ENCODE measurements at regions of chr2 and their contacts with region 1.

Region 1: GRCh38 chr2:189096769-189097447 is 82.7 kb downstream of the COL5A2 start:
- DNase-seq: no peak
- ATAC-seq: no peak
- H3K4me3 ChIP-seq: no peak overlapping the region
- H3K27ac ChIP-seq: no peak overlapping the region
- H3K4me1 ChIP-seq: peaks cover 0 to 34% (median 5%) of the 10 kb centered on the region in 12 donors
- H3K27me3 ChIP-seq: no peaks in the 10 kb centered on the region
- CTCF ChIP-seq: no peak
- POLR2A ChIP-seq: no peak

Region 2: DNA sequence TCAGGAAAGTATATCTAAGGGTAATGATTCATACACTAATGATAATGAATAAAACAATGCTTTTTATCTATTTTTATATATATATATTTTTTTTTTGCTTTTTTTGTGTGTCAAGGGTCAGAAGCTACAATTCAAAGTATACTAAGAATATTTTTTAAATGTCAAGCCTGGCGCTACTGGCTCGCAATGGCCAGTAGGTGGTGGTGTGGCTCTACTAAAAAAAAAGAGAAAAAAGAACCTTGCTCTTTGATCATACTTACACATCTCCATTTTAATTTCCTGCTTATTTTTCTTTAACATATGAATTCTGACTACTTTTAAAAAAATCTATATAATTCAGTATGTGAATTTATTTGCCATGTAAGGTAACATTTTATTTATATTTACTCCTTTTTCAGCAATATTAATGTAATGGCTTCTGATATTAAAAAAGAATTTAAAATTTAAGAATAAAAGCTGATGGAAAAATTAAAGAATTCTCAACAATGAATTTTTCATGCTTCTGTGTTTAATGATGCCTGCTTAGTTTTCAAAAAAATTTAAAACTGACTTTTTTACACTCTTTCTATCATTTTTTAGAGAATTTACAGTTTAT is 572.3 kb before region 1 on chr2:
- intact Hi-C with region 1: loop called in 1 of 10 experiments (anchors 5 kb)
- DNase-seq: no peak
- ATAC-seq: peak in 1 of 4 donors; percentile 72
- H3K4me3 ChIP-seq: no peak overlapping the region
- H3K27ac ChIP-seq: no peak overlapping the region
- H3K4me1 ChIP-seq: peaks cover 0 to 11% (median 0%) of the 10 kb centered on the region in 12 donors
- H3K27me3 ChIP-seq: no peaks in the 10 kb centered on the region
- CTCF ChIP-seq: peak; percentile 66 to 89 (median 80)
- POLR2A ChIP-seq: no peak

Region 3: DNA sequence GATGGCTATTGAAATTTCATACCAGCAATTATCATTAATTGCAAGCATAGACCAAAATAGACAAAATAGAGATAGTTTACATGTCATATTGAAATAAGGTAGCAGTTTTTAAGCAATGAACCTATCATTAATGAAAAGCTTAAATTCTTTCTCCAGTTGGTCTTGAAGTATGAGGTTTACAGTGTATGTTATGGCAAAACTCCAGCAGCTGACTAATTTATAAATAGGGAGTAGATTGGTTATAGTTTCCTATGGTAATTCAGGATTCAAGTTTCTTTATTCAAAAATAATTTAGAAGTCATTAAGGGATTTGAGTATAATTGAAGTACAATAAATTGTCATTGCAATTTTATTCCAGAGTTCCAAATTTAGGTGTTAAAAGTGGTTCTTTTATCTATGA is 152.3 kb after region 1 on chr2:
- intact Hi-C with region 1: no loop called
- DNase-seq: no peak
- ATAC-seq: no peak
- H3K4me3 ChIP-seq: no peak overlapping the region
- H3K27ac ChIP-seq: no peak overlapping the region
- H3K4me1 ChIP-seq: peaks cover 0 to 9% (median 0%) of the 10 kb centered on the region in 12 donors
- H3K27me3 ChIP-seq: no peaks in the 10 kb centered on the region
- CTCF ChIP-seq: no peak
- POLR2A ChIP-seq: no peak

Region 4: DNA sequence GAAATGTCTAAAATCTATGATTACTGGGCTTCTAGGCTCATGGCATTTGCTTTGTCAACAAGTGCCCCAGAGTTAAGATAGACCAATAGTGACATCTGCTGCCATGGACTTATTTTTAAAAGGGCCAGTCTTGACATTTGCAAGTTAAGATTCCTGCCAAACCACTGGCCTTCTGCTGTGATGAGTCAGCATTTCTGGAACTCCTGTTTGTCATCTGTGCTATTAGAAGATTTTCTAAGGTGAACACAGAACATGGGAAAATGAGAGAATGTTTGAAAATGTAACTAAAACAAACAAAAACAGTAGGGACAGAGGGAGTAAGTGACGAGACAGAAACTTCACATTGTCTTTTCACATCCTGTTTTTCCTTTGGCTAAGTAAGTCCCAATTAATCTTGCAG is 250.6 kb after region 1 on chr2:
- intact Hi-C with region 1: loop called in 3 of 10 experiments (anchors 5 to 10 kb)
- DNase-seq: peak in 2 of 5 donors; percentile 20 to 22
- ATAC-seq: peak; percentile 70 to 89 (median 77)
- H3K4me3 ChIP-seq: peak overlapping the region in 1 of 12 donors; percentile 24
- H3K27ac ChIP-seq: peak overlapping the region in 11 of 12 donors; percentile 3 to 77 (median 50)
- H3K4me1 ChIP-seq: peaks cover 0 to 26% (median 0%) of the 10 kb centered on the region in 12 donors
- H3K27me3 ChIP-seq: no peaks in the 10 kb centered on the region
- CTCF ChIP-seq: peak in 5 of 12 donors; percentile 19 to 44 (median 33)
- POLR2A ChIP-seq: no peak

Measured in heart left ventricle (tissue), 16 donors.